K562 (cell line): ENCODE measurements at regions of chr9 and their contacts with region 1.

Region 1: GRCh38 chr9:112559629-112560413 is 73.2 kb downstream of the KIAA1958 start:
- DNase-seq: peak in 2 of 4 experiments; percentile 58 to 84
- ATAC-seq: peak; percentile 94
- H3K4me3 ChIP-seq: no peak overlapping the region
- H3K27ac ChIP-seq: peak overlapping the region; percentile 61
- H3K4me1 ChIP-seq: peaks cover 17 to 25% of the 10 kb centered on the region in 2 experiments
- H3K27me3 ChIP-seq: no peaks in the 10 kb centered on the region
- CTCF ChIP-seq: no peak
- EP300 ChIP-seq: peak; percentile 51; the same call in 1 of the 2 replicates
- POLR2A ChIP-seq: no peak
- RAD21 ChIP-seq: no peak

Region 2: DNA sequence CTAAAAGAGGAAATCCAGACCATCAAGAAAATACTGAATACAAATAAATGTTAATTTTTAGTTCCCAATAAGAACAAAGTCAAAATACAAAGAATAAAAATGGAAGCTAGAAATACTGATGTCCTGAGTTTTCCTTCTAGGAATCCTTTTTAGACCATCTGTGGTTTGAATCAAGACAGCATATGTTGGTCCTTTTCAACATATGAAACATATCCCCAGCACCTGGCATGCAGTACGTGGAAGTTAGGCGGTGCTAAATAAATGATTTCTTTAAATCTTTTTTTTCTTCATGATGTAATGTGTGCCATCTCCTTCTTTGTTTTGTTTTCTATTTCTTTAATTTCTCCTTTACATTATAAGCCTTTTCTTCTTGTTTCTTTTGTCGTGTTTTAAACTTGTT is 39.2 kb before region 1 on chr9:
- CTCF ChIA-PET with region 1: interaction called, 3 read pairs
- POLR2A ChIA-PET with region 1: no interaction called
- in situ Hi-C with region 1: no loop called
- intact Hi-C with region 1: loop called (anchors 5 kb)
- DNase-seq: no peak
- ATAC-seq: no peak
- H3K4me3 ChIP-seq: no peak overlapping the region
- H3K27ac ChIP-seq: no peak overlapping the region
- H3K4me1 ChIP-seq: no peaks in the 10 kb centered on the region
- H3K27me3 ChIP-seq: no peaks in the 10 kb centered on the region
- CTCF ChIP-seq: no peak
- EP300 ChIP-seq: no peak
- POLR2A ChIP-seq: no peak
- RAD21 ChIP-seq: no peak

Region 3: DNA sequence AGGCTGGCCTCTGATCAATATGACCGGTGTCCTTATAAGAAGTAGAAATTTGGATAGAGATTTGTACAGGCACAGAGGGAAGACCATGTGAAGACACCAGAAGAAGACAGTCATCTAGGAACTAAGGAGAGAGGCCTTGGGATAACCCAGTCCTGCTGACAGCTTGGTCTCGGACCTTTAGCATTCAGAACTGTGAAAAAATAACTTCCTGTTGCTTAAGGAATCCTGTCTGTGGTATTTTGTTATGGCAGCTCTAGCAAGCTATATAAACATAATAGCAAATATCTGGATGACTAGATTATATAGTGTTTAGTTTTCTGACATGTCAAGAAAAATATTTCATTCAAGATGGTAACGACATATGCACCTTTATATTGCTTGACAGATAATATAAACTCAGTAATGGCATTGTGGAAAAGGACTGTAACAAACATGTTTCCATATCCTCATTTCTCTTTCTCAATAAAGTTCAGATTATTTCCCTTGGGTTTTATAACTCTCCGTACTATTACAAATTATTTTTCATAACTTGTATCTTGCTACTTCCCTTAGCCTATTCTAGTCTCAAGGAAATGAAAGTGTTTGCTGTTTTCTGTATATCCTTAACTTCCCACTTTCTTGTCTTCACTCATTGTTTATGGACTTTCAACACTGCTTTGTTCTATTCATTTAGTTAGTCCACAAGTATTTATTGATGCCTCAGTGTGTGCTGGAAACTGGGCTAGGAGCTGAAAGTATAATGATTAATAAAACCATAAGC is 10.8 kb before region 1 on chr9:
- CTCF ChIA-PET with region 1: interaction called, 4 read pairs
- POLR2A ChIA-PET with region 1: interaction called, 24 read pairs
- in situ Hi-C with region 1: no loop called
- intact Hi-C with region 1: no loop called
- DNase-seq: no peak
- ATAC-seq: no peak
- H3K4me3 ChIP-seq: no peak overlapping the region
- H3K27ac ChIP-seq: no peak overlapping the region
- H3K4me1 ChIP-seq: peaks cover 11 to 38% of the 10 kb centered on the region in 2 experiments
- H3K27me3 ChIP-seq: no peaks in the 10 kb centered on the region
- CTCF ChIP-seq: no peak
- EP300 ChIP-seq: no peak
- POLR2A ChIP-seq: no peak
- RAD21 ChIP-seq: no peak